H1 (cell line): ENCODE measurements at regions of chr20 and their contacts with region 1.

Region 1: DNA sequence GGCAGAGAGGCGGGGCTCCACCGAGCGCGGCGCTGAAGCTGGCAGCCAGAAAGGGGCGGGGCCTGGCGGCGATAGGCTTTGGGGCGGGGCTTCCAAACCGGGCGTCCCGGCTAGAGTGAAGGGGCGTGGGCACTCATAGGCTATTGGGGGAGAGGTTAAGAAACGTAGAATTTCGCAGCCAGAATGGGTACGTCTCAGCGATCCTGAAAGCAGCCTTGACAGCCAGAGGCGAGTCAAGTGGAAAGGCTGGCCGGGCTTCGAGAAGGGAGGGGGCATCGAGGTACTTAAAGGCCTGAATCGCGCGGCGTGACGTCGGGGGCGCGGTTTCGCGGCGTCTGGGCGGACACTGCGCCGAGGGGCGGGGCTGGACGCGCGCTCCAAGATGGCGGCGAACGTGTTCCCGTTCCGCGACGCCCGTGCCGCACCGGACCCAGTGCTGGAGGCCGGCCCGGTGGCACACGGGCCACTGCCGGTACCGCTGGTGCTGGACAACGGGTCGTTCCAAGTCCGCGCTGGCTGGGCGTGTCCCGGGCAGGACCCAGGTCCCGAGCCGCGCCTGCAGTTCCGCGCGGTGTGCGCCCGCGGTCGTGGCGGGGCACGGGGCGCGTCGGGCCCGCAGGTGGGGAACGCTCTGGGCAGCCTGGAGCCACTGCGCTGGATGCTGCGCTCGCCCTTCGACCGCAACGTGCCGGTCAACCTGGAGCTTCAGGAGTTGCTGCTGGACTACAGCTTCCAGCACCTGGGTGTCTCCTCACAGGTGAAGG is at the start of gene ACTR5:
- DNase-seq: peak in 1 of 2 experiments; percentile 99
- H3K4me3 ChIP-seq: peak within 1 kb of the TSS; percentile 62 to 90 (median 88)
- H3K27ac ChIP-seq: peak within 1 kb of the TSS; percentile 80; the same call in 1 of the 2 replicates
- H3K4me1 ChIP-seq: peaks cover 3 to 7% (median 6%) of the 10 kb centered on the region in 4 experiments; a peak in 4 of 7 replicates
- H3K27me3 ChIP-seq: peaks cover 2 to 12% (median 11%) of the 10 kb centered on the region in 4 experiments
- CTCF ChIP-seq: 0 out of 4 replicates have a peak, but pooled peaks of 1 of the 3 experiments have one; percentile 7
- EP300 ChIP-seq: no peak
- POLR2A ChIP-seq: peak in 1 of 2 experiments; percentile 78; a peak in 2 of 3 replicates
- RAD21 ChIP-seq: no peak
- total RNA-seq, gene ACTR5: 14.1 and 14.4 TPM in 2 replicates

Region 2: DNA sequence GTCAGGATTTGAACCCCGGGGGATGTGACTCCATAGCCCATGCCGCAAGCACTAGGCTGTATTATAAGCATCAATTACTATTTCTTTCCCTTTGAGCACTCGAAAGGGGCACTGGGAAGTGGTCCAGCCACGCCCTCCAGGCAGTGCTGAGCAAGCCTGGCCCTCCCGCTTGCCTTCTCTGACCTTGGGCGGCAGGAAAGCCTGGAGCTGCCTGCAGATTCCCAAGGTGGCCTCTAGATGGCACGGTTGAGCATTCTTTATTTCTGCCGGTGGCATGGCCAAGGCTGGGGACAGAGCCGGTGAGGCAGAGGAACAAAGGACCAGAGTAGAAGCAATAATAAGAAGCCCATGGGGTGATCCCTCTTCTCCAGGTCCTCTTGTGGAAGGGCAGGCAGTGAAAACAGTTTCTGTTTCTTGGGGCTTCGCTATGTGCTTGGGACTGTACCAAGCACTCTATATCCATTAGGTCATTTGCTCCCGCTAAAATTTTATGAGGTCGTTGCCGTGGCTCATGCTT is 114.6 kb before region 1 on chr20:
- CTCF ChIA-PET with region 1: interaction called, 12 read pairs
- POLR2A ChIA-PET with region 1: no interaction called
- DNase-seq: peak; percentile 51 to 91
- H3K4me3 ChIP-seq: no peak overlapping the region
- H3K27ac ChIP-seq: no peak overlapping the region
- H3K4me1 ChIP-seq: peaks cover 0 to 6% (median 2%) of the 10 kb centered on the region in 4 experiments; a peak in 3 of 7 replicates
- H3K27me3 ChIP-seq: peaks cover 0 to 2% (median 0%) of the 10 kb centered on the region in 4 experiments; a peak in 1 of 7 replicates
- CTCF ChIP-seq: peak; percentile 75 to 97 (median 86)
- EP300 ChIP-seq: no peak
- POLR2A ChIP-seq: no peak
- RAD21 ChIP-seq: peak; percentile 54 to 74

Region 3: DNA sequence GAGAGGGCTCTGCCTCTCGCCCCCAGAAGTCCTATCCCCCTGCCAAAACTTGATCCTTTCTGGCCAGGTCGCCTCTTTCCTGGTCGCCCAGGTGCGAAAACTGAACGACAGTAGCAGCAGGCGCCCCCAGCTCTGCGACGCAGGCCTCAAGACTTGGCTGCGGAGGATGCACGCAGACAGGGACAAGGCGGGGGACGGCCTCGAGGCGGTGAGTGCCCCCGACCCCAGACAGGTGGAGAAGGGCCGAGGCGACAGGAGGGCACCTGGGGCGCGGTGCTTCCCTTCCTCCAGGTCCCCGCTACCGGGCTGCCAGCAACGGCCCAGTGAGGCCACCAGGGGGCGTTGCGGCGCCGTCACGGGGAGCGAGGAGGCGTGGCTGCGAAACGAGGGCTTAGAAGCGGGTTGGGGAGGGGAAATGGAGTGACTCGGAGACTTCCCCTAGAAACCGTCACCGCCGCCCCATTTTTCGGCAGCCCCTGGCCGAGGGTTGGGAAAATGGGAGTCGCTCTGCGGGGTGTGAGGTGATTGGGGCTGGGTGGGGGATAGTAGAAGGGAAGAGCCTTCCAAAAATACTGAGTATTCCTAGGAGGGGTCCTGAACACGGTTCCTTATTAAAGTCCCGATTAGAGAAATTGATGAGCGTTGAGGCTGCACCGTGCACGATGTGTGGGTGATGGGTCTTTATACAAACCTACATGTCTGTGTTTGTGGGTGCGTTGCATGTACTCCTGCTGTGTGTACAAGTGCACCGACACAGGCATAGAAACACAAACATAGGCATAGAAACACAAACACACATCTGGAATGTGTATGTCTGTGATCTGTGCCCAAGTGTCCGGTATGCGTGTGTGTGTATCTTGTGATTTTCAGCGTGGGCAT is 102.1 kb before region 1 on chr20:
- CTCF ChIA-PET with region 1: interaction called, 93 read pairs
- POLR2A ChIA-PET with region 1: no interaction called
- DNase-seq: peak; percentile 36 to 98
- H3K4me3 ChIP-seq: peak overlapping the region in 3 of 4 experiments; percentile 30 to 48 (median 44); a peak in 6 of 8 replicates
- H3K27ac ChIP-seq: no peak overlapping the region
- H3K4me1 ChIP-seq: peaks cover 0 to 5% (median 3%) of the 10 kb centered on the region in 4 experiments; a peak in 5 of 7 replicates
- H3K27me3 ChIP-seq: peaks cover 8 to 43% (median 31%) of the 10 kb centered on the region in 4 experiments
- CTCF ChIP-seq: peak; percentile 95 to 97 (median 95)
- EP300 ChIP-seq: no peak
- POLR2A ChIP-seq: no peak
- RAD21 ChIP-seq: peak; percentile 92 to 95

Region 4: GRCh38 chr20:38764567-38765355 is 16.5 kb after region 1 on chr20:
- CTCF ChIA-PET with region 1: interaction called, 25 read pairs
- POLR2A ChIA-PET with region 1: no interaction called
- DNase-seq: no peak
- H3K4me3 ChIP-seq: no peak overlapping the region
- H3K27ac ChIP-seq: no peak overlapping the region
- H3K4me1 ChIP-seq: 0 out of 7 replicates have a peak, but pooled peaks cover 0 to 2% (median 0%) of the 10 kb centered on the region in 4 experiments
- H3K27me3 ChIP-seq: no peaks in the 10 kb centered on the region
- CTCF ChIP-seq: no peak
- EP300 ChIP-seq: no peak
- POLR2A ChIP-seq: no peak
- RAD21 ChIP-seq: no peak

Region 5: DNA sequence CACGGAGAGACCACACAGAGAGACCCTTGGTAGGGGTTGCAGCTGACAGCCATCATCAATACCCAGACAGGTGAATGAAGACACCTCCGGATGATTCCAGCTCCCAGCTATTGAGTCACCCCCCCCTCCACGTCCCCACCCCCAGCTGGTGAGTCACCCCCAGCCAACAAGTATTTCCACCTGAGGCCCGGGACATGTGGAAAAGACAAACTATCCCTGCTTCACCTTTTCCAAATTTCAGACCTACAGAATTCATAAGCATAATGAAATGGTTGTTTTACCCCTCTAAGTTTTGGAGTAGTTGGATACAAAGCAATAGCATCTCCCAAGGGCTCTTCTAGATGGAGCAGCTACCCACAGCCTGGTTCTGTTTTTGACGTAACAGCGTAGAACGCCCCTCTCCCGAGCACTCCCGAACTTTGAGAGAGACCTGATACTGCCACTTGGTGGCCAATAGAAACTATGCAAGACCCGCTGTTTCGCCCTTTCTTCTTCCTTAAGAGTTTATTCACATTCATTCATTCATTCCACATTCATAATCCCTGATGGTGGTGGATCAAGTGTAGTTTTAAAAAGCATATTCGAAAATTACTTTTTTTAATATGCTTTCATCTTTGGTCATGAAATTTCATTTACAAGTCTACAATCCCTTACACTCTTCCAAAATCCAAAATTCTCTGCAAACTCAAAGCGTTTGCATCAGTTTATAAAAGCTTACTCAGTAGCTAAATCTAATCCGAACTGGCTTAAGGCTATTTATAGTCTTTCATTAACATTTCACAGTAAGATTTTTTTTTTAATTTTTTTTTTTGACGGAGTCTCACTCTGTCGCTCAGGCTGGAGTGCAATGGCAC is 42.1 kb after region 1 on chr20:
- CTCF ChIA-PET with region 1: interaction called, 63 read pairs
- POLR2A ChIA-PET with region 1: no interaction called
- DNase-seq: no peak
- H3K4me3 ChIP-seq: no peak overlapping the region
- H3K27ac ChIP-seq: no peak overlapping the region
- H3K4me1 ChIP-seq: no peaks in the 10 kb centered on the region; a peak in 1 of 7 replicates
- H3K27me3 ChIP-seq: no peaks in the 10 kb centered on the region
- CTCF ChIP-seq: peak; percentile 36 to 72 (median 70)
- EP300 ChIP-seq: no peak
- POLR2A ChIP-seq: no peak
- RAD21 ChIP-seq: peak; percentile 75 to 80

Region 6: GRCh38 chr20:38831995-38832620 is 83.8 kb after region 1 on chr20:
- CTCF ChIA-PET with region 1: no interaction called
- POLR2A ChIA-PET with region 1: no interaction called
- DNase-seq: no peak
- H3K4me3 ChIP-seq: no peak overlapping the region
- H3K27ac ChIP-seq: no peak overlapping the region
- H3K4me1 ChIP-seq: 0 out of 7 replicates have a peak, but pooled peaks cover 0 to 6% (median 1%) of the 10 kb centered on the region in 4 experiments
- H3K27me3 ChIP-seq: no peaks in the 10 kb centered on the region
- CTCF ChIP-seq: no peak
- EP300 ChIP-seq: no peak
- POLR2A ChIP-seq: no peak
- RAD21 ChIP-seq: no peak

Region 7: DNA sequence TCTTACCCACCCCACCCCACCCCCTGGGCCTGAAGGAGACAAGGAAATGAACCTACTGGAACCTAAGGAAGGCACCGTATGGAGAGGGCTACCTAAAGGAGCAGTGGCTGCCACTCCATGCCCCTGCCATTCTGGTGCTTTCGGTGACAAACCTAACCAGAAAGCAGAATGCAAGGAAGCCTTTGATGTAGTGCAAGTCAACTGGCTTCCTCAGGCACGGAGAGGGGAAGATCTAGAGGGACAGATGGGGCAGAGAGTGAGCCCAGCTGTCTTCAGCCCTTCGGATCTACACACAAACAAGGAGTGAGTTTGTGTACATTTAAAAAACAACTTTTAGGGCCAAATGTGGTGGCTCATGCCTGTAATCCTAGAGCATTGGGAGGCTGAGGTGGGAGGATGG is 96.7 kb after region 1 on chr20:
- CTCF ChIA-PET with region 1: no interaction called
- POLR2A ChIA-PET with region 1: no interaction called
- DNase-seq: no peak
- H3K4me3 ChIP-seq: no peak overlapping the region
- H3K27ac ChIP-seq: no peak overlapping the region
- H3K4me1 ChIP-seq: peaks cover 0 to 3% (median 0%) of the 10 kb centered on the region in 4 experiments; a peak in 1 of 7 replicates
- H3K27me3 ChIP-seq: no peaks in the 10 kb centered on the region
- CTCF ChIP-seq: no peak
- EP300 ChIP-seq: no peak
- POLR2A ChIP-seq: no peak
- RAD21 ChIP-seq: no peak